CD8-positive, alpha-beta T cell (primary cell): ENCODE measurements at regions of chr22 and their contacts with region 1.

Region 1: GRCh38 chr22:26887456-26887855 is 230.1 kb downstream of the MIAT start:
- DNase-seq: no peak
- ATAC-seq: no peak
- H3K4me3 ChIP-seq: no peak overlapping the region
- H3K4me3 Mint-ChIP-seq: no peak overlapping the region
- H3K27ac ChIP-seq: no peak overlapping the region
- H3K27ac Mint-ChIP-seq: no peak overlapping the region
- H3K4me1 ChIP-seq: no peaks in the 10 kb centered on the region
- H3K4me1 Mint-ChIP-seq: no peaks in the 10 kb centered on the region
- H3K27me3 ChIP-seq: no peaks in the 10 kb centered on the region
- H3K27me3 Mint-ChIP-seq: peaks cover 10% of the 10 kb centered on the region
- CTCF ChIP-seq: no peak

Region 2: GRCh38 chr22:26205494-26205893 is 682.0 kb before region 1 on chr22:
- CTCF ChIA-PET with region 1: no interaction called
- POLR2A ChIA-PET with region 1: no interaction called
- intact Hi-C with region 1: loop called in 1 of 2 experiments (anchors 5 kb)
- DNase-seq: no peak
- ATAC-seq: no peak
- H3K4me3 ChIP-seq: no peak overlapping the region
- H3K4me3 Mint-ChIP-seq: no peak overlapping the region
- H3K27ac ChIP-seq: no peak overlapping the region
- H3K27ac Mint-ChIP-seq: no peak overlapping the region
- H3K4me1 ChIP-seq: no peaks in the 10 kb centered on the region
- H3K4me1 Mint-ChIP-seq: no peaks in the 10 kb centered on the region
- H3K27me3 ChIP-seq: no peaks in the 10 kb centered on the region
- H3K27me3 Mint-ChIP-seq: peaks cover 13% of the 10 kb centered on the region
- CTCF ChIP-seq: no peak

Region 3: GRCh38 chr22:26848244-26848920 is 39.1 kb before region 1 on chr22:
- CTCF ChIA-PET with region 1: no interaction called
- POLR2A ChIA-PET with region 1: no interaction called
- intact Hi-C with region 1: no loop called
- DNase-seq: peak in 1 of 9 experiments; percentile 2
- ATAC-seq: no peak
- H3K4me3 ChIP-seq: no peak overlapping the region
- H3K4me3 Mint-ChIP-seq: no peak overlapping the region
- H3K27ac ChIP-seq: no peak overlapping the region
- H3K27ac Mint-ChIP-seq: no peak overlapping the region
- H3K4me1 ChIP-seq: no peaks in the 10 kb centered on the region
- H3K4me1 Mint-ChIP-seq: no peaks in the 10 kb centered on the region
- H3K27me3 ChIP-seq: no peaks in the 10 kb centered on the region
- H3K27me3 Mint-ChIP-seq: no peaks in the 10 kb centered on the region
- CTCF ChIP-seq: no peak

Region 4: GRCh38 chr22:26903030-26903856 is 15.8 kb after region 1 on chr22:
- CTCF ChIA-PET with region 1: no interaction called
- POLR2A ChIA-PET with region 1: no interaction called
- intact Hi-C with region 1: no loop called
- DNase-seq: peak in 2 of 9 experiments; percentile 8 to 17
- ATAC-seq: no peak
- H3K4me3 ChIP-seq: peak overlapping the region in 1 of 2 experiments; percentile 12
- H3K4me3 Mint-ChIP-seq: peak overlapping the region; percentile 76
- H3K27ac ChIP-seq: no peak overlapping the region
- H3K27ac Mint-ChIP-seq: no peak overlapping the region
- H3K4me1 ChIP-seq: peaks cover 10% of the 10 kb centered on the region
- H3K4me1 Mint-ChIP-seq: peaks cover 20% of the 10 kb centered on the region
- H3K27me3 ChIP-seq: peaks cover 0 to 7% of the 10 kb centered on the region in 2 experiments
- H3K27me3 Mint-ChIP-seq: peaks cover 33% of the 10 kb centered on the region
- CTCF ChIP-seq: no peak

Region 5: GRCh38 chr22:26968859-26969523 is 81.5 kb after region 1 on chr22:
- CTCF ChIA-PET with region 1: no interaction called
- POLR2A ChIA-PET with region 1: no interaction called
- intact Hi-C with region 1: no loop called
- DNase-seq: no peak
- ATAC-seq: no peak
- H3K4me3 ChIP-seq: no peak overlapping the region
- H3K4me3 Mint-ChIP-seq: no peak overlapping the region
- H3K27ac ChIP-seq: no peak overlapping the region
- H3K27ac Mint-ChIP-seq: no peak overlapping the region
- H3K4me1 ChIP-seq: no peaks in the 10 kb centered on the region
- H3K4me1 Mint-ChIP-seq: no peaks in the 10 kb centered on the region
- H3K27me3 ChIP-seq: no peaks in the 10 kb centered on the region
- H3K27me3 Mint-ChIP-seq: peaks cover 9% of the 10 kb centered on the region
- CTCF ChIP-seq: no peak